Panc1 (cell line): ENCODE measurements at regions of chr6 and their contacts with region 1.

Region 1: DNA sequence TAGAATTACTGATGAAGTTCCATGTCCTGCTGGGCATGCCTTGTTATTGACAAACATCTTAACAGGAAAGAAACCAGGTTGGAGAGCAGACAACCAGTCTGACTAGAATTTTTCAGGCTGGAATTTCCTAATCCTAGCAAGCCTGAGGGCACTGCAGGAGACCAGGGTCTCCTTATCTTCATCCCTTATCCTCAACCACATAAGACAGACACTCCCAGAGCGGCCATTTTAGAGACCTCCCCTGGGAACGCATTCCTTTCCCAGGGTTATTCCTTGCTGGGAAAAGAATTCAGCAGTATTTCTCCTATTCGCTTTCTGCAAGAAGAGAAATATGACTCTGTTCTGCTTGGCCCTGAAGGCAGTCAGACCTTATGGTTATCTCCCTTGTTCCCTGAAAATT is 803.7 kb downstream of the GRIK2 start:
- DNase-seq: no peak
- ATAC-seq: no peak
- H3K4me3 ChIP-seq: no peak overlapping the region
- H3K27ac ChIP-seq: no peak overlapping the region
- H3K4me1 ChIP-seq: no peaks in the 10 kb centered on the region
- H3K27me3 ChIP-seq: no peaks in the 10 kb centered on the region
- CTCF ChIP-seq: no peak

Region 2: DNA sequence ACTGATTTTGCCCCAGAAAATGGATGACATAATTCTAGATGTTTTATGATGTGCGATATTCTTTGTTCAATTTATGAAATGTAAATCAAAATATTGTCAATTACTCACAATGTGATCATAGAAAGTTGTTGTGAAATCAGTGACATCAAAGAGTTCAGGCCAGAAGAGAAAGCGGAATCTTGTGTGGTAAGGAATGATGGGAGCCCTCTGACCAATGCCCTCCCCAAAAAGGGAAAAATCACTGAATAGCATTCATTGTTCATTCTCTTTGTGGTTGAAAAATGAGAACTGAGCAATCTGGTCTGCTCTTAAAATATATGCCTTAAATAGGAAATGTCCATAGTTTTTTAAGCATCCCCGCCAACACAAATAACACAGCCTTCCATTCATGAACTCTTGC is 1050.8 kb before region 1 on chr6:
- CTCF ChIA-PET with region 1: no interaction called
- POLR2A ChIA-PET with region 1: no interaction called
- in situ Hi-C with region 1: no loop called
- intact Hi-C with region 1: no loop called
- DNase-seq: no peak
- ATAC-seq: no peak
- H3K4me3 ChIP-seq: no peak overlapping the region
- H3K27ac ChIP-seq: no peak overlapping the region
- H3K4me1 ChIP-seq: no peaks in the 10 kb centered on the region
- H3K27me3 ChIP-seq: no peaks in the 10 kb centered on the region
- CTCF ChIP-seq: no peak

Region 3: GRCh38 chr6:102126488-102126887 is 70.7 kb before region 1 on chr6:
- CTCF ChIA-PET with region 1: no interaction called
- POLR2A ChIA-PET with region 1: interaction called, 17 read pairs
- in situ Hi-C with region 1: no loop called
- intact Hi-C with region 1: no loop called
- DNase-seq: no peak
- ATAC-seq: no peak
- H3K4me3 ChIP-seq: no peak overlapping the region
- H3K27ac ChIP-seq: no peak overlapping the region
- H3K4me1 ChIP-seq: no peaks in the 10 kb centered on the region
- H3K27me3 ChIP-seq: no peaks in the 10 kb centered on the region
- CTCF ChIP-seq: no peak